AG04449 (cell line): ENCODE measurements at regions of chr4 and their contacts with region 1.

Region 1: DNA sequence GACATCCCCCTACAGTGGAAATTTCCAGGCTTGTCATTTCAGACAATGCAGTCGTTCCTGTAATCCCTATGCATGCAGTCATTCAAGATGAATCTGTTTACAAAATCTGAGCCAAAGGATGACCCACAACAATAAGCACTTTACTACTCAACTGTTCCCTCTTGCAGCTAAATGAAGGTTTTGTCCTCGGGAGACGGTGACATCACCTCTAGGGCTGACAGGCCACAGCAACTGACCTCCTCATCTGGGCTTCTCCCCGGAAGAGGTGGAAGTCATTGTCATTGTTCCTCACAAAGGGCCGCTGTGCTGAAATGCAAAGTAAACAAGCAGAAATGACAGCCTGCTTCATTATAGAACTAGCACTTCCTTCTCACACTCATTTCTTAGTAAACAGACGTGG is 29.2 kb downstream of the CLRN2 start:
- DNase-seq: no peak
- H3K4me3 ChIP-seq: no peak overlapping the region
- CTCF ChIP-seq: no peak

Region 2: DNA sequence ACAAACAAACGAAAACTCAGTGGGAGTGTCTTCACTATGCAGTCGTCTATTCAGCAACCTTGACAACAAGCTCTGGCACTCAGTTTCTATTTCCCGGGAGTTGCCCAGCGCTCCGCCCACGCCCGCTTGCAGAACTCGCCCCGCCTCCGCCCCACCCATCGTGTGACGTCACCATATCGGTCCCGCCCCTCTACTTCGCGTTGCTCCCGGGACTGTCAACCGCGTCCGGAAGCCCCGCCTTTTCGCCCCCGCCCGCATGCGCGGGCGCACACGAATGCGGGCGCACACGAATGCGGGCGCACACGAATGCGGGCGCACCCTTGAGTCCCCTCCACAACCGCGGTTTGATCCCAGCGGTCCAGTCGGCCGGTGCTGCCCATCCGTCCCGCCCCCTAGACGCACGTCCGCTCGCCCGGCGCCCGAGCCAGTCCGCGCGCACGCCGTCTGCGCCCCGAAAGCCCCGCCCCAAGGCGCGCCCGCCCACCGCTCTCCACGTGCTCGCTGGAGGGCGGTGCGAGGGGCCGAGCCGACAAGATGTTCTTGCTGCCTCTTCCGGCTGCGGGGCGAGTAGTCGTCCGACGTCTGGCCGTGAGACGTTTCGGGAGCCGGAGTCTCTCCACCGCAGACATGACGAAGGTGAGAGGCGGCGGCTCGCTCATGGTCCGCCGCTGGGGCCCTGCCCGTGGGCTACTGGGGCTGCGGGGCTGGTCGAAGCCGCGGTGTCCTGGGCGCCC is 32.9 kb after region 1 on chr4 and contains the start of gene LAP3:
- CTCF ChIA-PET with region 1: interaction called, 10 read pairs
- POLR2A ChIA-PET with region 1: interaction called, 4 read pairs
- DNase-seq: peak; percentile 74
- H3K4me3 ChIP-seq: peak within 1 kb of the TSS; percentile 79
- CTCF ChIP-seq: no peak

Region 3: GRCh38 chr4:17636696-17637622 is 92.8 kb after region 1 on chr4:
- CTCF ChIA-PET with region 1: interaction called, 105 read pairs
- POLR2A ChIA-PET with region 1: no interaction called
- DNase-seq: no peak
- H3K4me3 ChIP-seq: no peak overlapping the region
- CTCF ChIP-seq: peak; percentile 80

Region 4: GRCh38 chr4:17667653-17668201 is 123.5 kb after region 1 on chr4:
- CTCF ChIA-PET with region 1: no interaction called
- POLR2A ChIA-PET with region 1: no interaction called
- DNase-seq: no peak
- H3K4me3 ChIP-seq: no peak overlapping the region
- CTCF ChIP-seq: no peak

Region 5: DNA sequence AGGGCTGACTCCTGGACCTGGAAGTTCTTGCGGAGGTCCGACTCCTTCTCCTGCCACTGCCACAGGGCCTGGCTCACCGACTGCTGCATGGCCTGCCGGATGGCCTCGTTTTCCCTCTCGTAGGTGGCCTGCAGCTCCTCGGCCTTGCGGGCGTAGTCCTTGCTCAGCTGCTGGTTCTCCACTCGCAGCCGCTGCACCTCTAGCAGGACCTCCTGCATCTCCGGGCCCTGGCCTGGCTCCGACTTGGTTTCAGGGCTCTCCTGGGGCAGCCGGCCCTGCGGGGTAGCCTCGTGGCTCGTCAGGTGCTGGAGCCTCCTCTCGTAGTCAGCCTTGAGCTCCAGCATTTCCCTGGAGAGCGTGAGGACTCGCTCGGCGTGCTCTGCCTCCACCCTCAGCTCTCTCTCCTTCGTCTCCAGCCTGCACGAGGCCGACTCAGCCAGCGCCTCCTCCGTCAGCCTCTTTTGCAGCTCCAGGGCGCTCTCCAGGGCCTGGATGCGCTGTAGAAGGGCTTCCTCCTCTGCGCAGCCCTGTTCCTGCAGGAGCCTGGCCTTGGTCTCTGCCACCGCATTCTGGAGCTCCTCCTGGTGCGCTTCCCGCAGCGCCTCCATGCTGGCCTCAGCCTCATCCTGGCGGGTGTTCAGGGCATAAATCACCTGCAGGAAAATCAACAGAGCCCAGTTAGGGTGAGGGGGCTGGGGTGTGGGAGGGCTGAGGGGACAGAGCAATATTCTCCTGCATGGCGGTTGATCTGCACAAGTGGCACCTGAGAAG is 165.0 kb after region 1 on chr4:
- CTCF ChIA-PET with region 1: no interaction called
- POLR2A ChIA-PET with region 1: no interaction called
- DNase-seq: no peak
- H3K4me3 ChIP-seq: no peak overlapping the region
- CTCF ChIP-seq: no peak

Region 6: DNA sequence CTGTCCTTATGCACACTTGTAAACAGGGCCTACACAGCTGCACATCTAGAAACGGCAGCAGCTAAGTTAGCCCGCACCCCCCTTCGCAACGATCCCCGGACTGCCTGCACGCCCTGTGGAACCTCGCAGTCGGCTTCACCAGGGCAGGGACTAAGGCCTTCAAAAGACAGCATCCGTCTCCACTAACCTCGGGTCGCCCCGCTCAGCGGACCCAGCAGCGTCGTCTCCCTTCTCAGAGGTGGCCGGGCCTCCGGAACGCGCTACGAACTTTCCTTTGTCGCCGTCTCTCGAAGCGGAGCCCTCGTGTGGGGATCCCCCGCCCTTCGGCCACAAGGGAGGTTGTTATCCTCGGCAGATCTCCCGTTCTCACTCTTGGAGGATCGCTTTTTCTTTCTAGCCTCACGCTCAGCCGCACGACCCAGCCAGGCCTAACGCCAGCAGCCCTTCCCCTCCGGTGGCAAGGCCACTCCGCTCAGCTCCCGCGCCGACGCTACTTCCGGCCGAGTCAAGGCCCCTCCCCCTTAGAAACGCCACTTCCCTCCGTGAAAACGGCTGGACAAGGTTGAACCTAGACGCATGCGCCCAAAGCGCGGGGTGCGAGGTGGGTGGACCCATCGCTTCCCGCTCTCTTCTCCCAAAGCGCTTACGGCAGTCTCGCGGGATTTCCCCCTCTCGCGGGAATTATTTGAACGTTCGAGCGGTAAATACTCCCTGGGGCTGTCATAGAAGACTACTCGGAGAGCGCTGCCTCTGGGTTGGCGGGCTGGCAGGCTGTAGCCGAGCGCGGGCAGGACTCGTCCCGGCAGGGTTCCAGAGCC is 266.3 kb after region 1 on chr4 and contains the starts of genes DCAF16 and NCAPG:
- CTCF ChIA-PET with region 1: interaction called, 123 read pairs
- POLR2A ChIA-PET with region 1: interaction called, 5 read pairs
- DNase-seq: peak; percentile 93
- H3K4me3 ChIP-seq: peak within 1 kb of the TSS; percentile 87
- CTCF ChIP-seq: no peak